Panc1 (cell line): ENCODE measurements at regions of chrX and their contacts with region 1.

Region 1: GRCh38 chrX:129982274-129983251 is at the start of gene BCORL1:
- DNase-seq: peak; percentile 67
- ATAC-seq: peak; percentile 87
- H3K4me3 ChIP-seq: no peak within 1 kb of the TSS; a peak in 1 of 4 replicates
- H3K27ac ChIP-seq: peak within 1 kb of the TSS; percentile 77
- H3K4me1 ChIP-seq: peaks cover 18% of the 10 kb centered on the region
- H3K27me3 ChIP-seq: no peaks in the 10 kb centered on the region
- CTCF ChIP-seq: no peak
- total RNA-seq, gene BCORL1: 67.4 TPM

Region 2: GRCh38 chrX:129931411-129932015 is 51.0 kb before region 1 on chrX:
- CTCF ChIA-PET with region 1: no interaction called
- POLR2A ChIA-PET with region 1: interaction called, 9 read pairs
- in situ Hi-C with region 1: no loop called
- intact Hi-C with region 1: loop called (anchors 5 kb)
- DNase-seq: peak; percentile 81
- ATAC-seq: peak; percentile 89
- H3K4me3 ChIP-seq: peak overlapping the region; percentile 55 to 96
- H3K27ac ChIP-seq: peak overlapping the region; percentile 81
- H3K4me1 ChIP-seq: peaks cover 8% of the 10 kb centered on the region; the same call in 1 of the 2 replicates
- H3K27me3 ChIP-seq: no peaks in the 10 kb centered on the region
- CTCF ChIP-seq: no peak

Region 3: DNA sequence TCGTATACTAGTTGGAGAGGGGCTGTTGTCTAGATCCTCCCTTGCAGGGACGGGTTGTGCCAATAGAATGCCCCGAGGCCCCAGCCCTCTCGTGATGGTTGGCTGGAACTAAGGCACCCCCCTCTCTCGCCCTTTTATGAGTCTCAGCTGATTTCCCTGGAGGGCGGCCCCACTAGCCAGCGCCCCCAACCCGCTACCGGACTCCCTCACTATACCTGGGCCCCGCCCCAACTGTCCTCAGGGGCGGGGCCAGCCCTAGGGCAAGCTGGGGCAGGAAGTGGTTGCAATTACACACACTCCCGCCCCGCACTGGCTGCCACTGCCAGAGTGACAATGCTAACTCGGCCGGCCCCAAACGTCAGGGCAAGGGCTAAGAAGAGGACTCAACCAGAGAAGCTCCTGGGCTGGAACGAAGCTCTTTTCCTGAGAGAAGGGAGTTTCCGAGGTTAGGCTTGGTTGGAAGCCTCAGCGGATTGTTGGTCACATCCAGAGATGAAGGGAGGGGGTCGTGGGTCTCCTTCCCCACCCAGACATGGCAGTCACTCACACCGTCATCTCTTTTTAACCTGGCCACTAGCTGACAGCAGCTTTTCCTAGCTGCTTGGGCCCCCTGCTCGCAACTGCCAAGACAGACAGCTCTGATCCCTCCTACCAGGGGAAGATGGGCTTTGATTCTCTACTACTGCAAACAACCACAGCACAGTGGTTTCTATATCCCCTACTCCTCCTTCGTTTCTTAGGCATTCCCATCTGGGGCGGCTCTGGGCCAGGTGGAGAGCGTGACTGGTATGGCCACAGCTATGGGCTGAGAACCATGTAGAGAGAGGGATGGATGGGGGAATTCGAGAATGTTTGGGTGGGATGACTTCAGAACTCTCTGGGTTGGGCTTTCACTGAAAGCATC is 21.1 kb before region 1 on chrX:
- CTCF ChIA-PET with region 1: no interaction called
- POLR2A ChIA-PET with region 1: interaction called, 12 read pairs
- in situ Hi-C with region 1: no loop called
- intact Hi-C with region 1: no loop called
- DNase-seq: no peak
- ATAC-seq: peak; percentile 85
- H3K4me3 ChIP-seq: peak overlapping the region; percentile 27 to 62
- H3K27ac ChIP-seq: peak overlapping the region; percentile 89
- H3K4me1 ChIP-seq: peaks cover 38% of the 10 kb centered on the region
- H3K27me3 ChIP-seq: no peaks in the 10 kb centered on the region
- CTCF ChIP-seq: no peak

Region 4: GRCh38 chrX:130523461-130524394 is 541.2 kb after region 1 on chrX:
- CTCF ChIA-PET with region 1: no interaction called
- POLR2A ChIA-PET with region 1: no interaction called
- in situ Hi-C with region 1: no loop called
- intact Hi-C with region 1: no loop called
- DNase-seq: no peak
- ATAC-seq: peak; percentile 99
- H3K4me3 ChIP-seq: peak overlapping the region; percentile 52 to 71
- H3K27ac ChIP-seq: no peak overlapping the region
- H3K4me1 ChIP-seq: 0 out of 2 replicates have a peak, but pooled peaks cover 4% of the 10 kb centered on the region
- H3K27me3 ChIP-seq: no peaks in the 10 kb centered on the region; the same call in 1 of the 2 replicates
- CTCF ChIP-seq: no peak